ENCODE measurements at regions of chr11 and their contacts with region 1.

Region 1: GRCh38 chr11:90434858-90435257 is 212.0 kb upstream of the CHORDC1 start:
- DNase-seq: no peak
- ATAC-seq: no peak
- H3K4me3 ChIP-seq: no peak overlapping the region
- H3K27ac ChIP-seq: no peak overlapping the region
- H3K4me1 ChIP-seq: peaks cover 0 to 11% (median 0%) of the 10 kb centered on the region in 9 donors
- H3K27me3 ChIP-seq: no peaks in the 10 kb centered on the region
- CTCF ChIP-seq: peak in 6 of 9 donors; percentile 22 to 50 (median 40)

Region 2: GRCh38 chr11:90288212-90288821 is 146.5 kb before region 1 on chr11:
- intact Hi-C with region 1: loop called in 2 of 10 experiments (anchors 10 kb)
- DNase-seq: no peak
- ATAC-seq: no peak
- H3K4me3 ChIP-seq: no peak overlapping the region
- H3K27ac ChIP-seq: no peak overlapping the region
- H3K4me1 ChIP-seq: no peaks in the 10 kb centered on the region
- H3K27me3 ChIP-seq: peaks cover 0 to 2% (median 0%) of the 10 kb centered on the region in 7 donors
- CTCF ChIP-seq: peak; percentile 30 to 75 (median 61)

Measured in heart right ventricle (tissue), 16 donors.